Vagina (tissue), 2 donors: ENCODE measurements at regions of chr4 and their contacts with region 1.

Region 1: GRCh38 chr4:171308665-171309064 is 504.5 kb upstream of the GALNTL6 start:
- DNase-seq: no peak
- H3K4me3 ChIP-seq: no peak overlapping the region
- H3K27ac ChIP-seq: no peak overlapping the region
- H3K4me1 ChIP-seq: no peaks in the 10 kb centered on the region
- H3K27me3 ChIP-seq: no peaks in the 10 kb centered on the region
- CTCF ChIP-seq: no peak
- POLR2A ChIP-seq: no peak

Region 2: DNA sequence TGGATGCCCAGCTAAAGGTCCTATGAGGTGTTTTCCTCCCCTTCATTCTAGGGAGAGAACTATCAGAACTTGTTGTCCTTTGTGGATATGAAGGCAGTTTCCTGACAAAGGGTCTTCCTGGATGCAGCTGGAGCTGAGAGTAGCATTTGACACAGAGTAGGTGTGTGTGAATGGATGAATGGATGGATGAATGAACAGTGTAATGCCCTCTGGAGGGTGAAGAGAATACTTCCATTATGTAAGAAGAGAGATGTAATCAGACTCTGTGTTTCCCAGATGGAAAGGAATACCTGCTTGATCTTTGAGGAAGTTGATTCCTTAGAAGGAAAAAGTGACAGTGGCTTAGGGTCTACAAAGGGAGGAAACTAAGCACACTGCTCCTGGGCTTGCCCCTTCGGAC is 1163.5 kb before region 1 on chr4:
- intact Hi-C with region 1: loop called (anchors 5 kb)
- DNase-seq: no peak
- H3K4me3 ChIP-seq: no peak overlapping the region
- H3K27ac ChIP-seq: no peak overlapping the region
- H3K4me1 ChIP-seq: no peaks in the 10 kb centered on the region
- H3K27me3 ChIP-seq: no peaks in the 10 kb centered on the region
- CTCF ChIP-seq: no peak
- POLR2A ChIP-seq: no peak

Region 3: DNA sequence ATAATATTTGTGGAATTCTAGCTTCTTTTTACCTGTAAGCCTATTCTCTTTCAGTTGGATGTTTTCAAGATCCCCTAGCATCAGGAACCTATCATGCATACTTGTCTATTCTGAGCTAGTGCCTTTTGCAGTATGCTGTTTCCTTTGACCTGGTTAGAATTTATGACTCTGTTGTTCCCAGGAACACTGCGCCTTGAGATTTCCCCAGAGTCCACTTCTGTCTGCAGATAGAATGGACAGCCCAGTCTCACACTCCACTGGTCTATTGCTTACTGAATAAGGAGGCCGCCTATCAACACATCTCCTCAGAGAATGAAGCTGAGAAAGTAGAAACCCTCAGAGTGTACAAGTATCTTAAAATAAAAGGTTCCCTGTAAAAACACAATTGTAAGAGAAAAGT is 39.4 kb after region 1 on chr4:
- intact Hi-C with region 1: no loop called
- DNase-seq: no peak
- H3K4me3 ChIP-seq: no peak overlapping the region
- H3K27ac ChIP-seq: no peak overlapping the region
- H3K4me1 ChIP-seq: no peaks in the 10 kb centered on the region
- H3K27me3 ChIP-seq: no peaks in the 10 kb centered on the region
- CTCF ChIP-seq: no peak
- POLR2A ChIP-seq: no peak